H1 (cell line): ENCODE measurements at regions of chr1 and their contacts with region 1.

Region 1: DNA sequence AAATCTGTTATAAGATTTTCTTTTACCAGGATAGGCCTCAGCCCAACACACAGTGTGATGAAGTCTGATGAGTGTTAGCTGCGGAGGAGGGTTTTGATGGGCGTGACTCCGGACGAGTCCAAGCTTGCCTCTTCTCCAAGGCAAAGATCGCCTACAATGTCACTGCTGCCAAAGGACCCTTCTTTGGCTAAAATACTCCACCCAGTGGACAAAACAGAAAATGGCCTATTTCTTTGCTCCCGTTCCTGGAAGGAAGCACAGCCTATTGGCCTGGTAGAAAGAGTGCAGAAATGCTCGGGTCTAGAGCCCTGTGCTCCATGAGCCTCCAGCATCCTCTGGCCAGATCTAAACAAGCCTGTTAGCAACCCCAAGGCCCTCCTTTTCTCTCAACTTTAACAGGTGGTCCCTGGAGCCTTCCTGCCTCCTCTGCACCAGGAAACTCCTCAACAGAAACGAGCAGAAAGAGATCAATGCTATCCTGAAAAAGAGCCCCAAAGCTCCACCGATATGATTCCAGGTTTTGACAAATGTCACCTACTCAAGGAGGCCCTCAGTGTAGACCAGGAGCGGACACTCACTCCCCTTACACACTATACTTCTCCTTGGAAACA is 3.4 kb upstream of the CASQ2 start:
- DNase-seq: peak; percentile 53 to 72
- H3K4me3 ChIP-seq: peak overlapping the region in 3 of 4 experiments; percentile 13 to 47 (median 30); a peak in 4 of 8 replicates
- H3K27ac ChIP-seq: no peak overlapping the region
- H3K4me1 ChIP-seq: no peaks in the 10 kb centered on the region; a peak in 2 of 7 replicates
- H3K27me3 ChIP-seq: no peaks in the 10 kb centered on the region
- CTCF ChIP-seq: peak in 2 of 3 experiments; percentile 91 to 93; a peak in 3 of 4 replicates
- EP300 ChIP-seq: no peak
- POLR2A ChIP-seq: peak in 1 of 2 experiments; percentile 48; a peak in 1 of 3 replicates
- RAD21 ChIP-seq: peak; percentile 91 to 93

Region 2: DNA sequence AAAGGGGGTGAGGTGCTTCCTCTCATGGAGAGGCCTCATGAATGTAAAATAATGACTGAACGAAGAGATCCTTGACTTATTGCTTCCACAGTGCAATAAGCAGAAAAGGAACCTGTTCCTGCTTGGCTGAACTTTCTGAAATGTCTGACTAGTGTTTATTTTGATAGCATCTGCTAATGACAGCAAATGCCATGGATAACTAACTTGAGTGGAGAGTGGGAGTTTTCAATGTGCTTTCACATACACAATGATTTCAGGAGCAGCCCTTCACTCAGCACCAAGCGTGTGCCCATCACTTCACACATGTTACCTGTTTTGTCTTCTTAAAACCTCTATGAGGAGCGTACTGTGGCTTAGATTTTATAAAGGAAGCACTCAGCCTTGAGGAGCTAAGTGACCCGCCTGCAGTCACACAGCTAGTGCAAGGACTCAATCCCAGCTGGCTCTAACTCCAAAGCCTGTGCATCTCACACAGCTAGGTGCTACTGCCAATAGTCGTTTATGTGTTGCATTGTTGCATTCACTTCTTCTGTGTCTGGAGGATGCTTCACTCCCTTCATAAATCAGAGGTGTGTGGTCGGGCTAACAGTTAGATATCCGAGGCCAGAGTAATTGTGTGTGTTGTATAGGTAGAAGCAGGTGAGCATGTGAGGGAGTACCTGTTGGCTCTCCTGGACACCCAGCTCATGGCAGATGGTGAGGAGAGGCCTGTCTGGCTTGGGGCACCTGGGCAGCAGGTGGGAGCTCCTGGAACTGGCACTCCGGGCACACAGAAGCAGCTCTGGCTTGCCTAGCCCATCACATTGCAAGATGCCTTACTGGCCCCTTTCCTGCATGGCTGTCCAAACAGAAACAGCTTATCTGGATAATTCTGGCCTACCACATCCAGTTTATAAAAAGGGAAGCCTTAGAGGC is 16.2 kb before region 1 on chr1:
- CTCF ChIA-PET with region 1: interaction called, 10 read pairs
- POLR2A ChIA-PET with region 1: no interaction called
- DNase-seq: no peak
- H3K4me3 ChIP-seq: no peak overlapping the region
- H3K27ac ChIP-seq: no peak overlapping the region
- H3K4me1 ChIP-seq: no peaks in the 10 kb centered on the region
- H3K27me3 ChIP-seq: no peaks in the 10 kb centered on the region
- CTCF ChIP-seq: no peak
- EP300 ChIP-seq: no peak
- POLR2A ChIP-seq: no peak
- RAD21 ChIP-seq: no peak

Region 3: DNA sequence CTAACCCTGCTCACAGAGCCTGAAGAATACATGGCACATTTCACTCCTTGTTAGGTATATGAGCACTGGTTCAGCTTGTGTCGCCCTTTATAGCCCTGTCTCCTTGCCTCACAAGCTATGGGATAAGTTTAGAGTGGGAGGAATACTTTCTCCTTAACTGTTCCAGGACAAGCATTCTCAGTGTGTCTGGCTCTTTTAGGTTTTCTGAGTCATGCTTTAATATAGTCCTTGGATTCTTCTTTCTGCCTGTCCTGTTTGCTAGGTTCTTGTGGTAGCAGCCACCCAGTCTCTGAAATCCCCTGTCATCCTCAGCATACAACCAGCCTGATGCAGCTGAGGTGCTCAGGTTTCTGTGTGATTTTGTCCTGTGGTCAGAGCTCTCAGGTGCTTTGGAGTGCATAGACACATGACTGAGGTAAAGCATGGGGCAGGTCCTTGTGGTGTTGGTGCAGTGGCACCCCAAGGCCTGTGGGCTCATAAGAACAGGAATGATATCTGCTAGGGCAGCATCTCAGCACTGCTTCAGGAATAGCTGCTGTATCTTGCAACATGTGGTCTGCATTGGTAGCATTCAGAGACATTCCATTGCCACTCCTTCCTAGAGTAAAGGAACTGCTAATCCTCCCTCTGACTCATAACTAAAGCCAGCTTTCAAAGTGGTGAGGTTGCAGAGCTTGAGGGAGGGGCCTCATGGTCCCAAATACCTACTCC is 10.8 kb after region 1 on chr1:
- CTCF ChIA-PET with region 1: interaction called, 13 read pairs
- POLR2A ChIA-PET with region 1: no interaction called
- DNase-seq: no peak
- H3K4me3 ChIP-seq: no peak overlapping the region
- H3K27ac ChIP-seq: no peak overlapping the region
- H3K4me1 ChIP-seq: no peaks in the 10 kb centered on the region
- H3K27me3 ChIP-seq: no peaks in the 10 kb centered on the region; a peak in 1 of 7 replicates
- CTCF ChIP-seq: no peak
- EP300 ChIP-seq: no peak
- POLR2A ChIP-seq: no peak
- RAD21 ChIP-seq: no peak